Colonic mucosa (tissue), 4 donors: ENCODE measurements at regions of chr3 and their contacts with region 1.

Region 1: DNA sequence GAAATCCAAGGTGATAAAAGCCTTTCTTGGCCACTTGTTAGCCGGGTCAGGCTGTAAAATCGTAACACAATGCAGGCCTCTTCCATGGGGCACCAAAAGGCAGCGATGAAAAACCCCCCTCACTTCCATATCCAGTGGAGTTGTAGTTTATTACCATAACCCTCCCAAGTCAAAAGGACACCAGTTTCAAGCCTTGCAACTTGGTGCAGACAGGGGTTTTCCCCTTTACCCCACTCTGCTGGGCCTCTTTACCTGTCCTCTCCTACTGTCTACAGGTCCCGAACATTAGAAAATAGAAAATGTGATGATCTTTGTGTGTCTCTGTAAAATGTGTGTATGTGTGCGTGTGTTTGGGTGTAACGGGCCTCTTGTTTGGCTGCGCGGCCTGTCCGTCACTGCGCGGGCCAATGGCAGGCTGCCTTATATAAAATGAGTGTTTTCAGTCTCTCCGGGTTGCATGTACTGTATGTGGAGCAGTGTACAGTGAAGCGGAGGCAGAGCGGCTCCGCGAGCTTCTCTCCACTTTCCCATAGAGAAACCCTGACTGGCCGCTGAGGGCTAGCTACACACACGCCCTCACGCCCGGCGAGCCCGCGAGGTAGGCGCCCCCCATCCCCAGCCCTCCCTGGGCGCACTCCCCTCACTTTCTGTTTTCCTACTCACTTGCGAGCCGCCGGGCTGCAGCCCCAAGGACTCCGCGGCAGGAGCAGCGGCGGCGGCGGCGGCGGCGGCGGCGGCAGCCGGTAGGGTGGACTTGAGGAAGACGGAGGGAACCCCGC is at the start of gene BBX:
- DNase-seq: peak; percentile 96
- H3K4me3 ChIP-seq: peak within 1 kb of the TSS; percentile 82
- H3K27ac ChIP-seq: peak within 1 kb of the TSS; percentile 95
- H3K4me1 ChIP-seq: no peaks in the 10 kb centered on the region
- H3K27me3 ChIP-seq: no peaks in the 10 kb centered on the region
- CTCF ChIP-seq: no peak
- total RNA-seq, gene BBX: 21.5 to 44.3 TPM

Region 2: GRCh38 chr3:107264888-107265287 is 257.8 kb before region 1 on chr3:
- intact Hi-C with region 1: loop called (anchors 10 kb)
- DNase-seq: peak; percentile 20
- H3K4me3 ChIP-seq: no peak overlapping the region
- H3K27ac ChIP-seq: no peak overlapping the region
- H3K4me1 ChIP-seq: no peaks in the 10 kb centered on the region
- H3K27me3 ChIP-seq: no peaks in the 10 kb centered on the region
- CTCF ChIP-seq: no peak

Region 3: GRCh38 chr3:107429320-107430181 is 93.1 kb before region 1 on chr3:
- intact Hi-C with region 1: loop called (anchors 2 kb)
- DNase-seq: peak; percentile 70
- H3K4me3 ChIP-seq: peak overlapping the region; percentile 14
- H3K27ac ChIP-seq: peak overlapping the region; percentile 10
- H3K4me1 ChIP-seq: no peaks in the 10 kb centered on the region
- H3K27me3 ChIP-seq: no peaks in the 10 kb centered on the region
- CTCF ChIP-seq: peak; percentile 82

Region 4: DNA sequence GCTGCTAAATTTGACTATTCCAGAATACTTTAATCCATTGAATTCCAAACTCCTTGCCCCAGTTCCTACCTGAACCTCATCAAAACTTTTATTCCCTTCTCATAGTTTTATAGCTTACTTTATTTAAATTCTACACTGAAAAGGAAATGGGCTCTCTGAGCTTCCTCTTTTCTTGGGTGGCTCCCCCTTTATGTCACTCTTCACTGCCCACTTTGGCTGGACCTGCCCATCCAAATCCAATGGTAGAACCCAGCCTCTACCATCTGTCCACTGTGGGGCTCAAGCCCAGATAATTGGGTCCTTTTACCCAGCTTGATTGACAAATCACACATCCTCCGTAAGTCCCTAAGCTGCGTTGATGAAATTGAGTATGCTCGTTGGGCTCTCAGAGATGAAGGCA is 216.5 kb after region 1 on chr3:
- intact Hi-C with region 1: no loop called
- DNase-seq: no peak
- H3K4me3 ChIP-seq: no peak overlapping the region
- H3K27ac ChIP-seq: no peak overlapping the region
- H3K4me1 ChIP-seq: no peaks in the 10 kb centered on the region
- H3K27me3 ChIP-seq: no peaks in the 10 kb centered on the region
- CTCF ChIP-seq: no peak